AG04449 (cell line): ENCODE measurements at regions of chr9 and their contacts with region 1.

Region 1: GRCh38 chr9:114155263-114155972 is at the start of gene COL27A1:
- DNase-seq: no peak
- H3K4me3 ChIP-seq: peak within 1 kb of the TSS; percentile 73
- CTCF ChIP-seq: peak; percentile 98

Region 2: DNA sequence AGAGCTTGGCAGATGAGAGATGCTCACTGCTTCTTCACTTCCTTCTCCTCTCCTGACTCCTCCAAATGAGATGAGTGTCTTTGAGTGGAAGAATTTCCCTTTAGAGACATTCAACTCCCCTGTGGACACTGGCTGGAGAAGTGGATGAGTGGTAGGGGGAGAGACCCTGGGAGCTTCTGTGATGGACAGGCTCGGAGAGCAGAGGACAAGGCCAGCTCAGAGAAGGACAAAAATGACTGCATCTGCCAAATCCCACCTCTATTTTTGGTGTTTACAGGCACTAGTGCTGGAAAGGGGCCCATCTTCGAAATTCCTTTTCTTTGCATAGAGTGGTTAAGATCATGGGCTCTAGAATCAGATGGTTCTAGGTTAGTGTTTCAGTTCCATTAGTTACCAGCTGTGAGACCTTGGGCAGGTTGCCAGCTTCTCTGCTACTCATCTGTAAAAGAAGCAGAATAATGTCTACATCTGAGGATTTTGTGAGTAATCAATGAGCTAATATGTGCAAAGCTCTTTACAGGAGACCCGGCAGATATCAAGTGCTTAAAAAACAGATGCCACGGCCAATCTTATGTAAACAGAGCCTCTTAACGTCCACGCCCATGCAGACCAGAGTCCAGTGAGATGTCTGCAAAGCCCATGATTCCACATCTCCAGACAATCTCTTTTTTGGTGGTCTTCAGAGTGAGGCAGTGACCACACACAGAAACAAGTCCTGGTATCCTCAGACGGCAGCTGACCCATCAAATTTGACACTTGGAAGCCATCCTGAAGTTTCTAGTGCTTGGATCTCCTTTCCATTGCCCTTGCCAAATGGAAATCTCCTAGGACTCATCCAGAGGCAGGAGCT is 13.6 kb before region 1 on chr9:
- CTCF ChIA-PET with region 1: interaction called, 122 read pairs
- POLR2A ChIA-PET with region 1: interaction called, 4 read pairs
- DNase-seq: no peak
- H3K4me3 ChIP-seq: no peak overlapping the region
- CTCF ChIP-seq: no peak

Region 3: GRCh38 chr9:114224247-114224610 is 68.8 kb after region 1 on chr9:
- CTCF ChIA-PET with region 1: interaction called, 10 read pairs
- POLR2A ChIA-PET with region 1: no interaction called
- DNase-seq: no peak
- H3K4me3 ChIP-seq: no peak overlapping the region
- CTCF ChIP-seq: no peak

Region 4: DNA sequence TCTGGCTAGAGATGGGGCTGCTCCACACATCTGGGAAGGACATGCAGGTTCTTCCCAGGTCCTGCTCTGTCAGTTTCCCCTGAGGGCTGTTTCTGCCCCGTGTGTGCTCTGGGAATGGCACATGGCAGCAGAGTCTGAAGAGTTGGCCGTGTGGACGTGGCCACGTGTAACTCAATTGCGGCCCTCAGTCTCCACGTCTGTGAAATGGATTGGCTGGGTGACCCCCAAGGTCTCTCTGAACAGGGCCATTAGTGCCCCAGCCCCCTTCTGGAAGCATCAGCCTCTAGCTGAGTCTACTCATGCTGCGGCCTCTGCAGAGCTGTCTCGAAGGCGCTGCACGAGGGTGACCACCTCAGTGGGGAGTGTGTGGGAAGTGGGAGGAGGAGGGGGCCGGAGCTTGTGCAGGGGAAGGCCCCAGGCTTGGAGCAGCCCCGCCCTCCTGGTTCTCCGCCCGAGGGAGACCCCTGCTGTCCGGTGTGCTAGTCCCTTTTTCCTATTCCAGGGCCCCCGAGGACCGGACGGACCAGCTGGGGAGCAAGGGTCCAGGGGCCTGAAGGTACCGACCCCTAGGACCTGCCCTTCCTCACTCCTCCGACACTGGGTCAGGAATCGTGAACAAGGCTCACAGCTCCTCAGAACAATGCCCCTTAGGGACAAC is 108.6 kb after region 1 on chr9:
- CTCF ChIA-PET with region 1: interaction called, 28 read pairs
- POLR2A ChIA-PET with region 1: no interaction called
- DNase-seq: no peak
- H3K4me3 ChIP-seq: no peak overlapping the region
- CTCF ChIP-seq: peak; percentile 41

Region 5: GRCh38 chr9:114282926-114283325 is 127.5 kb after region 1 on chr9:
- CTCF ChIA-PET with region 1: interaction called, 280 read pairs
- POLR2A ChIA-PET with region 1: interaction called, 10 read pairs
- DNase-seq: peak; percentile 96
- H3K4me3 ChIP-seq: no peak overlapping the region
- CTCF ChIP-seq: no peak